Activated T-helper 2 cell treated with anti-CD3 and anti-CD28 coated beads, Interferon-gamma antibody, Interleukin-2, Interleukin-4, amounts not matched to agents 10 μg/mL and 5 μg/mL and 100 μg/mL, durations not matched to agents 14 hours and 24 hours and 36 hours (primary cell): ENCODE measurements at regions of chr10 and their contacts with region 1.

Region 1: GRCh38 chr10:96831867-96832720 is at the start of gene LCOR:
- DNase-seq: peak; percentile 77
- H3K4me3 Mint-ChIP-seq: peak within 1 kb of the TSS; percentile 88
- H3K27ac Mint-ChIP-seq: peak within 1 kb of the TSS; percentile 94
- H3K4me1 Mint-ChIP-seq: peaks cover 40% of the 10 kb centered on the region
- H3K27me3 Mint-ChIP-seq: no peaks in the 10 kb centered on the region
- total RNA-seq, gene LCOR: 23.6 and 27.3 TPM in 2 replicates

Region 2: GRCh38 chr10:96244354-96244753 is 587.7 kb before region 1 on chr10:
- intact Hi-C with region 1: no loop called
- DNase-seq: no peak
- H3K4me3 Mint-ChIP-seq: no peak overlapping the region
- H3K27ac Mint-ChIP-seq: no peak overlapping the region
- H3K4me1 Mint-ChIP-seq: no peaks in the 10 kb centered on the region
- H3K27me3 Mint-ChIP-seq: peaks cover 7% of the 10 kb centered on the region

Region 3: GRCh38 chr10:96389785-96390184 is 442.3 kb before region 1 on chr10:
- intact Hi-C with region 1: no loop called
- DNase-seq: no peak
- H3K4me3 Mint-ChIP-seq: no peak overlapping the region
- H3K27ac Mint-ChIP-seq: no peak overlapping the region
- H3K4me1 Mint-ChIP-seq: no peaks in the 10 kb centered on the region
- H3K27me3 Mint-ChIP-seq: peaks cover 20% of the 10 kb centered on the region

Region 4: GRCh38 chr10:96586419-96587263 is 245.5 kb before region 1 on chr10 and contains the start of gene TM9SF3:
- intact Hi-C with region 1: loop called (anchors 1 kb)
- DNase-seq: peak; percentile 87
- H3K4me3 Mint-ChIP-seq: peak within 1 kb of the TSS; percentile 95
- H3K27ac Mint-ChIP-seq: peak within 1 kb of the TSS; percentile 88
- H3K4me1 Mint-ChIP-seq: peaks cover 29% of the 10 kb centered on the region
- H3K27me3 Mint-ChIP-seq: peaks cover 10% of the 10 kb centered on the region
- total RNA-seq, gene TM9SF3: 81.3 and 82.3 TPM in 2 replicates

Region 5: GRCh38 chr10:96747734-96748550 is 84.2 kb before region 1 on chr10:
- intact Hi-C with region 1: loop called (anchors 1 kb)
- DNase-seq: peak; percentile 20
- H3K4me3 Mint-ChIP-seq: peak overlapping the region; percentile 26
- H3K27ac Mint-ChIP-seq: peak overlapping the region; percentile 51
- H3K4me1 Mint-ChIP-seq: peaks cover 18% of the 10 kb centered on the region
- H3K27me3 Mint-ChIP-seq: peaks cover 19% of the 10 kb centered on the region

Region 6: DNA sequence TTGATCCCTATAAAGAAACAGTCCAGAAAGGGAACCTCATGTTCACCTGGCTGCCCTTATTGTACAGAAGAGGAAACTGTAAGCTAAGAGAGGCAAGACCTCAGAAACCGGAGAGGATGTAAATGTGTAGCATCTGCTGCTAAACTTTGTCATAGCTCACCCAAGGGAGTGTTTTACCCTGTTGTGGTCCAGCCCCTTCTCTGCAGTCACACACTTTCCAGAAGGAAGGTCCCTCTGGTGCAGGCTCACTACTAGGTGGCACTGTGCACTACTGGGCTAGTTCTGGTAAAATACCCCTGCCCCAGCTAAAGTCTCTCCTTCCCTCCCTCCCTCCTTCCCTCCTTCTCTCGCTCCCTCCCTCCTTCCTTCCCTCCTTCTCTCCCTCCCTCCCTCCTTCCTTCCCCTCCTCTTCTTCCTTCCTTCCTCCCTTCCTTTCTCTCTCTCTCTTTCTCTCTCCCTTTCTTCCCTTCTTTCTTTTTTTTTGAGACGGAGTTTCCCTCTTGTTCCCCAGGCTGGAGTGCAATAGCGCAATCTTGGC is 42.5 kb before region 1 on chr10:
- intact Hi-C with region 1: loop called (anchors 2 kb)
- DNase-seq: peak; percentile 31
- H3K4me3 Mint-ChIP-seq: no peak overlapping the region
- H3K27ac Mint-ChIP-seq: no peak overlapping the region
- H3K4me1 Mint-ChIP-seq: no peaks in the 10 kb centered on the region
- H3K27me3 Mint-ChIP-seq: peaks cover 18% of the 10 kb centered on the region

Region 7: GRCh38 chr10:96850825-96851224 is 18.7 kb after region 1 on chr10:
- intact Hi-C with region 1: no loop called
- DNase-seq: no peak
- H3K4me3 Mint-ChIP-seq: no peak overlapping the region
- H3K27ac Mint-ChIP-seq: no peak overlapping the region
- H3K4me1 Mint-ChIP-seq: no peaks in the 10 kb centered on the region
- H3K27me3 Mint-ChIP-seq: no peaks in the 10 kb centered on the region

Region 8: GRCh38 chr10:96890172-96890513 is 58.0 kb after region 1 on chr10:
- intact Hi-C with region 1: loop called (anchors 10 kb)
- DNase-seq: no peak
- H3K4me3 Mint-ChIP-seq: no peak overlapping the region
- H3K27ac Mint-ChIP-seq: no peak overlapping the region
- H3K4me1 Mint-ChIP-seq: peaks cover 28% of the 10 kb centered on the region
- H3K27me3 Mint-ChIP-seq: no peaks in the 10 kb centered on the region